Left cardiac atrium (tissue), 4 donors: ENCODE measurements at regions of chr11 and their contacts with region 1.

Region 1: GRCh38 chr11:118198370-118198769 is 21.9 kb upstream of the SCN2B start:
- DNase-seq: peak; percentile 89
- ATAC-seq: peak; percentile 55 to 66

Region 2: DNA sequence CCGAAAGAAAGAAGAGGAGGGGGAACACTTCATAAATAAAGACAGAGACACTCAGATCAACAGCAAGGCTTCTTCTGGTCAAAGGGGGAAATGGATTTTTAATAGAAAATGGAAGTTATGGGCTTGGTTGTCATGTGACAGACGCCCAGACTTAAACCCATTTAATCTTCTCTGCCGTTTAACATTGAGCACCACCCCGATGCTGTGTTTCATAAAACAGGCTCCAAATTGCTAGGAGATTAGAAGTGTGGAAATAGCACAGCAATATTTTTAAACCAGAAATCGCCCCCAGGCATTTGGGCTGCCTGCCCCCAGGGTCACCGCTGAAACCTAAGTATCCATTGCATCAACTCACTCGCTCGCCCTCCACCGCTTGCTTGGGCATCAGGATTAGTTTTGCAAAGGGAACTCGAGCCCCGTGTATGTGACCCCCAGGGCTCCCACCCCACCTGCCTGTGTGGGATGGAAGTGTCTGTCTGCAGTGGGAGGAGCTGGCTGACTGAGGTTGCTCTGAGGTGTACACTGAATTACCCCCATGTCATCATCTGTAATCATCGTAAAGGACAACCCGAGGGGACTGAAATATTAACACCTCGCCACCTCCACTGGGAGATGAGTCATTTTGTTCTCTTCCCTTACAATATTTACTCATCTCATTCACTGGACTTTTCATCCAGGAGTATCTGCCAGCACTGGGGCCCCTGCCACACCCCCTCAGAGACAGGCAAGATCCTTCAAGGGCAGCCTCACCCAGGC is 412.1 kb before region 1 on chr11:
- intact Hi-C with region 1: no loop called
- DNase-seq: no peak
- ATAC-seq: no peak

Region 3: GRCh38 chr11:118277306-118277705 is 78.9 kb after region 1 on chr11:
- intact Hi-C with region 1: loop called in 1 of 2 experiments (anchors 10 kb)
- DNase-seq: no peak
- ATAC-seq: no peak

Region 4: DNA sequence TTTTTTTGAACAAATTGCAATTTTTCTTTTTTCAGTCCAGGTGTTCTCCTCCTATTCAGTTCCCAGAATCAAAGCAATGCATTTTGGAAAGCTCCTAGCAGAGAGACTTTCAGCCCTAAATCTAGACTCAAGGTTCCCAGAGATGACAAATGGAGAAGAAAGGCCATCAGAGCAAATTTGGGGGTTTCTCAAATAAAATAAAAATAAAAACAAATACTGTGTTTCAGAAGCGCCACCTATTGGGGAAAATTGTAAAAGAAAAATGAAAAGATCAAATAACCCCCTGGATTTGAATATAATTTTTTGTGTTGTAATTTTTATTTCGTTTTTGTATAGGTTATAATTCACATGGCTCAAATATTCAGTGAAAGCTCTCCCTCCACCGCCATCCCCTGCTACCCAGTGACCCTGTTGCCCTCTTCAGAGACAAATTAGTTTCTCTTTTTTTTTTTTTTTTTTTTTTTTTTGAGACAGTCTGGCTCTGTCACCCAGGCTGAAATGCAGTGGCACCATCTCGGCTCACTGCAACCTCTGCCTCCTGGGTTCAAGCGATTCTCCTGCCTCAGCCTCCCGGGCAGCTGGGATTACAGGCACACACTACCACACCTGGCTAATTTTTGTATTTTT is 154.8 kb after region 1 on chr11:
- intact Hi-C with region 1: loop called (anchors 5 to 10 kb)
- DNase-seq: no peak
- ATAC-seq: no peak

Region 5: GRCh38 chr11:118366287-118366686 is 167.9 kb after region 1 on chr11:
- intact Hi-C with region 1: loop called in 1 of 2 experiments (anchors 5 kb)
- DNase-seq: no peak
- ATAC-seq: peak in 1 of 2 donors; percentile 57

Region 6: DNA sequence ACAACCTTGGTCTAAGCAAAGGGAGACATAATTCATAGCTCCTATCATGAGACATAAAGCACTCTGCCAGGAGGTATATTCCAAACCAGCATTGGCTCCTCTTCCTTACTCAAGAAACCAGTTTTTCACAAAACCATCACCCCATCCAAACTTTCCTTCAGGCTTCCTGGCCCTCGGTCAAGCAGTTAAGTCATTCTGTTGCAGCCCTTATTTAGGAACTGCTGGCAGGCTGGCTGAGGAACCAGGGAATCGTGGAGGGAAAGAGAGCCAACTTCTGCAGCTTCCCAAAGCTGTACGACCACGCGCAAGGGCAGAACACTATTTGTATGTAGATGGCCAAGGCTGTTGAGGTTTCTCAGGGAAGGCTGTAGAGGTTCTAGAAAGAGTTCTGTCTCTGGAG is 366.7 kb after region 1 on chr11:
- intact Hi-C with region 1: loop called in 1 of 2 experiments (anchors 10 kb)
- DNase-seq: peak; percentile 54
- ATAC-seq: peak; percentile 53 to 57